ENCODE measurements at regions of chr18 and their contacts with region 1.

Region 1: GRCh38 chr18:28767727-28768211 is 590.8 kb upstream of the CDH2 start:
- DNase-seq: no peak
- ATAC-seq: no peak
- H3K4me3 Mint-ChIP-seq: no peak overlapping the region
- H3K27ac Mint-ChIP-seq: no peak overlapping the region
- H3K4me1 Mint-ChIP-seq: peaks cover 2% of the 10 kb centered on the region
- H3K27me3 Mint-ChIP-seq: no peaks in the 10 kb centered on the region

Region 2: GRCh38 chr18:28846958-28847357 is 79.2 kb after region 1 on chr18:
- CTCF ChIA-PET with region 1: no interaction called
- POLR2A ChIA-PET with region 1: no interaction called
- intact Hi-C with region 1: loop called in 1 of 2 experiments (anchors 10 kb)
- DNase-seq: no peak
- ATAC-seq: no peak
- H3K4me3 Mint-ChIP-seq: no peak overlapping the region
- H3K27ac Mint-ChIP-seq: no peak overlapping the region
- H3K4me1 Mint-ChIP-seq: no peaks in the 10 kb centered on the region
- H3K27me3 Mint-ChIP-seq: no peaks in the 10 kb centered on the region

Region 3: GRCh38 chr18:28905509-28905908 is 137.7 kb after region 1 on chr18:
- CTCF ChIA-PET with region 1: no interaction called
- POLR2A ChIA-PET with region 1: no interaction called
- intact Hi-C with region 1: no loop called
- DNase-seq: no peak
- ATAC-seq: no peak
- H3K4me3 Mint-ChIP-seq: no peak overlapping the region
- H3K27ac Mint-ChIP-seq: no peak overlapping the region
- H3K4me1 Mint-ChIP-seq: no peaks in the 10 kb centered on the region
- H3K27me3 Mint-ChIP-seq: no peaks in the 10 kb centered on the region

Region 4: GRCh38 chr18:29488617-29489016 is 720.8 kb after region 1 on chr18:
- CTCF ChIA-PET with region 1: no interaction called
- POLR2A ChIA-PET with region 1: no interaction called
- intact Hi-C with region 1: loop called in 1 of 2 experiments (anchors 10 kb)
- DNase-seq: no peak
- ATAC-seq: no peak
- H3K4me3 Mint-ChIP-seq: no peak overlapping the region
- H3K27ac Mint-ChIP-seq: no peak overlapping the region
- H3K4me1 Mint-ChIP-seq: no peaks in the 10 kb centered on the region
- H3K27me3 Mint-ChIP-seq: no peaks in the 10 kb centered on the region